GM12878 (cell line): ENCODE measurements at regions of chr20 and their contacts with region 1.

Region 1: GRCh38 chr20:10673988-10674711 is at the start of gene JAG1:
- DNase-seq: peak; percentile 60
- ATAC-seq: peak; percentile 64
- H3K4me3 ChIP-seq: peak within 1 kb of the TSS; percentile 81
- H3K27ac ChIP-seq: peak within 1 kb of the TSS; percentile 66
- H3K4me1 ChIP-seq: peaks cover 27% of the 10 kb centered on the region
- H3K27me3 ChIP-seq: peaks cover 0 to 5% of the 10 kb centered on the region in 2 experiments; a peak in 2 of 4 replicates
- CTCF ChIP-seq: no peak
- EP300 ChIP-seq: no peak
- POLR2A ChIP-seq: peak; percentile 72
- RAD21 ChIP-seq: no peak
- polyA plus RNA-seq, gene JAG1: 0.66 to 1.0 TPM

Region 2: DNA sequence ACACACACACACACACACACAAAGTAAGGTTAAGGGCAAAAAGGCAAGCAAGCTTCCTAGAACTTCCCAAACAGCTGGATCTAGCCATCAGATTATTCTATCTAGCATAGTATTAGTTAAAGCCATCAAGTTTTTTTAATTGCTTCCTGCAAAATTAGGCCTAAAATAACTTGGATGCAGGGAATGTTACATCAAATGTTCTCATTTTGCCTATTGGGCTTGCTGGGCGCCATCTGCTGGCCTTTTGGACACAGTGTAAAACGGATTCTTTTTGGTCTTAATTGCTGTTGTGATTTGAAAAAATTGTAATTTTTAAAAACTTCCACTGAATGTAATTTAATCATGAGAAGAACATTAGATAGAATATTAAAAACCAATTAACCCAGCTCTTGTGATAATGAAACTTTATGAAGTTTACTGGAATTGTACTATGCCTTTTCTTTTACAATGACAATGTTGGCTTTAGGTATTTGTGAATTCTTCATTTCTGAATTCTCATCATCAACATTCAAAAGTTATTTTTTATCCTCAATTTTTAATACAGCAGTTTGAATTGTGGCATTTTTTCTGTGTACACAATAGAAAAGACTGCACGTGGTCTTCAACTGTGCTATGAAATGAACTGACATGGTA is 247.0 kb before region 1 on chr20:
- CTCF ChIA-PET with region 1: no interaction called
- POLR2A ChIA-PET with region 1: no interaction called
- RAD21 ChIA-PET with region 1: no interaction called
- SMC1A ChIA-PET with region 1: no interaction called
- in situ Hi-C with region 1: no loop called
- intact Hi-C with region 1: loop called (anchors 5 kb)
- DNase-seq: no peak
- ATAC-seq: peak; percentile 37
- H3K4me3 ChIP-seq: no peak overlapping the region
- H3K27ac ChIP-seq: no peak overlapping the region
- H3K4me1 ChIP-seq: peaks cover 18% of the 10 kb centered on the region
- H3K27me3 ChIP-seq: no peaks in the 10 kb centered on the region
- CTCF ChIP-seq: peak; percentile 75 to 78 (median 75)
- EP300 ChIP-seq: no peak
- POLR2A ChIP-seq: no peak
- RAD21 ChIP-seq: peak; percentile 63

Region 3: GRCh38 chr20:10647465-10647864 is 26.7 kb before region 1 on chr20:
- CTCF ChIA-PET with region 1: interaction called, 4 read pairs
- POLR2A ChIA-PET with region 1: no interaction called
- RAD21 ChIA-PET with region 1: interaction called, 5 read pairs
- SMC1A ChIA-PET with region 1: interaction called, 15 read pairs
- in situ Hi-C with region 1: no loop called
- intact Hi-C with region 1: no loop called
- DNase-seq: no peak
- ATAC-seq: peak; percentile 62
- H3K4me3 ChIP-seq: no peak overlapping the region
- H3K27ac ChIP-seq: no peak overlapping the region
- H3K4me1 ChIP-seq: peaks cover 14% of the 10 kb centered on the region
- H3K27me3 ChIP-seq: no peaks in the 10 kb centered on the region
- CTCF ChIP-seq: peak; percentile 37 to 52 (median 42); a peak in 5 of 6 replicates
- EP300 ChIP-seq: no peak
- POLR2A ChIP-seq: no peak
- RAD21 ChIP-seq: peak; percentile 43

Region 4: DNA sequence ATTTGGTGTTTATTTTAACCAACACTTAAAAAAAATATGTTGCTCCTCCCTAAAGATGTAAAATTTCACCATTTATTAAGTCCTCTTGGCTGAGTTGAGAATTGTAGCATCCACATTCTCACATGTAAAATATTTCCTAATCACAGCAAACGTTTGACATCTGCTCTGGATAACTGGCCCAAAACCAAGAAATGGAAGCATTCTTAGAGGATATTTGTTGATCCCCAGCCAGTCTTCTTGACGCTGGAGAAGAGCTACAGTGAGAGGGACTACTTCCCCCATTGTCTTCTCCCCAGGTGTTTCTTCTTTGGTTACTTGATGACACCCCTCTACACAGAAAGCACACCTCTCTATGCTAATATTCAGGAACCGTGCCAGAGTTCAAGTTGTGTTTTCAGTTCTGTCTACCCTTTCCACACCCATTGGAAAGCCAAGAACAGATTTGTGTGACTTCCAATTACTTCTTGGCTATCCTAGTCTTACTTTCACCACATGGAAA is 454.1 kb after region 1 on chr20:
- CTCF ChIA-PET with region 1: no interaction called
- POLR2A ChIA-PET with region 1: no interaction called
- RAD21 ChIA-PET with region 1: no interaction called
- SMC1A ChIA-PET with region 1: no interaction called
- in situ Hi-C with region 1: no loop called
- intact Hi-C with region 1: loop called (anchors 10 kb)
- DNase-seq: no peak
- ATAC-seq: no peak
- H3K4me3 ChIP-seq: no peak overlapping the region
- H3K27ac ChIP-seq: no peak overlapping the region
- H3K4me1 ChIP-seq: no peaks in the 10 kb centered on the region
- H3K27me3 ChIP-seq: no peaks in the 10 kb centered on the region
- CTCF ChIP-seq: no peak
- EP300 ChIP-seq: no peak
- POLR2A ChIP-seq: no peak
- RAD21 ChIP-seq: no peak

Region 5: DNA sequence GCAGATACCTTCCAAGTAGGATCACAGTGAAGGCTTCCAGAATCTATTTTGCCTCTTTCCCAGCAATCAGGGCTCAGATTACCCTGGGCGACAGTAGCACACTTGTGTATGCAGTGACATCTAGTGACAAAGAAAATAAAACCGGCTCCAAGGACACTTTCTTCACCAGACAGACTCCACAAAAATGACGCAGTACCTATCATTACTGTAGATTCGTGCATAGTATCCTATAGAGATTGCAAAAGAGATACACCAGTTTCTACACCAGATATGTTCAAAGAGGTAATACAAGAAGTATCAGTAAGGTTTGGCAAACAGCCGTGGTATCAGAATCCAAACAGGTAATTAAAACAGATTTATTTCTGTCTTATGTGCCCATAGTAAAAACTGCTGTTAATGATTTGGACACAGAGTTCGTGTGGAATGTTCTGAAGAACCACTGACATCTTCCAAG is 600.0 kb after region 1 on chr20:
- CTCF ChIA-PET with region 1: interaction called, 5 read pairs
- POLR2A ChIA-PET with region 1: interaction called, 3 read pairs
- RAD21 ChIA-PET with region 1: interaction called, 11 read pairs
- SMC1A ChIA-PET with region 1: interaction called, 9 read pairs
- in situ Hi-C with region 1: loop called (anchors 5 kb)
- intact Hi-C with region 1: no loop called
- DNase-seq: no peak
- ATAC-seq: peak; percentile 94
- H3K4me3 ChIP-seq: no peak overlapping the region
- H3K27ac ChIP-seq: no peak overlapping the region
- H3K4me1 ChIP-seq: no peaks in the 10 kb centered on the region; the same call in 1 of the 2 replicates
- H3K27me3 ChIP-seq: no peaks in the 10 kb centered on the region
- CTCF ChIP-seq: peak; percentile 51 to 84 (median 54); a peak in 5 of 6 replicates
- EP300 ChIP-seq: no peak
- POLR2A ChIP-seq: no peak
- RAD21 ChIP-seq: peak; percentile 94

Region 6: GRCh38 chr20:11544029-11544678 is 870.0 kb after region 1 on chr20:
- CTCF ChIA-PET with region 1: interaction called, 4 read pairs
- POLR2A ChIA-PET with region 1: no interaction called
- RAD21 ChIA-PET with region 1: interaction called, 5 read pairs
- SMC1A ChIA-PET with region 1: interaction called, 5 read pairs
- in situ Hi-C with region 1: loop called (anchors 10 kb)
- intact Hi-C with region 1: loop called (anchors 1 kb)
- DNase-seq: peak; percentile 40
- ATAC-seq: peak; percentile 97
- H3K4me3 ChIP-seq: no peak overlapping the region
- H3K27ac ChIP-seq: no peak overlapping the region
- H3K4me1 ChIP-seq: no peaks in the 10 kb centered on the region
- H3K27me3 ChIP-seq: no peaks in the 10 kb centered on the region
- CTCF ChIP-seq: peak; percentile 33 to 76 (median 39); a peak in 4 of 6 replicates
- EP300 ChIP-seq: no peak
- POLR2A ChIP-seq: no peak
- RAD21 ChIP-seq: peak; percentile 86